ENCODE measurements at regions of chr16 and their contacts with region 1.

Region 1: DNA sequence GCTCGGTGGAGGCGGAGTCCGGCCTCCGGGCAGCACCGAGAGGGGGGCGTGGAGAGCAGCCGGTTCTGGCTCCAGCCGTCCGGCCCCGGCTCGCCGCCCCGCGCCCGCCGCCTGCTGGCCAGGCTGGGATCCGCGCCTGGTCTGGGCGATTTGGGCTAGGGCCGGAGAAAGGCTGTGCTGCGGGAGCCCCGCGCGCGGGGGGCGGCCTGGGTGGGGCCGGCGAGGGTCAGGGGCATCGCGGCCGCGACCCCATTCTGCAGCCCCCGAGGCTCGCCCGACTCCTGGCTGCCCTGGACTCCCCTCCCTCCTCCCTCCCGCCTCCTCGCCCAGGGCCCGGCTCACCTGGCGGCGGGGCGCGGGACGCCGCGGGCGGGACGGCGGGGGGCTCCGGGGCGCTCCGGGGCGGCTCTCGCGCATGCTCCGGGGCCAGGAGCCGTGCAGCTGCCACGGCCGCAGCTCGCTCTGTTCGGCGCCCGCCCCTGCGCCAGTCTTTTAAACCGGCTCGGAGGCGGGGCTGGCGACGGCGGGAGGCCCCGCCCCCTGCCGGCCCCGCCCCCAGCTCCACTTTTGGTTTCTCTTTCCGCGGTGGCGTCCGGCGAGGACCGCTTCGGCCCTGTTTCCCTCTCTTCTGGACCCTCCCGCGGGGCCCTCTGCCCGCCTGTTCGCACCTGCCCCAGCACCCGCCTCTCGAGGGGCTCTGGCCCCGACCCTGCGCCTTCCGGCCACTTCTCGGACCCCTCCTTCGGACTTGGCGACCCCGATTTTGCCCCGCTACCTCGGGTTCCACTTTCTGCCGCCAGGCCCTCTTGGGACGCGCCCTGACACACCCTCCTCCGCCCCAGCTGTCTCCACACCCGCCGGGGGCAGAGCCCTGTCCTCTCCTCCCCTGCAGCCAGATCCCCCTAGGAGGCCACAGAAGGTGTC is at the start of gene SOCS1:
- DNase-seq: peak; percentile 78
- H3K4me3 ChIP-seq: peak within 1 kb of the TSS; percentile 43 to 89 (median 73)
- H3K27ac ChIP-seq: peak within 1 kb of the TSS; percentile 31
- H3K4me1 ChIP-seq: peaks cover 10% of the 10 kb centered on the region
- H3K27me3 ChIP-seq: peaks cover 0 to 1% of the 10 kb centered on the region in 2 experiments
- CTCF ChIP-seq: peak; percentile 76 to 86
- POLR2A ChIP-seq: peak; percentile 97
- total RNA-seq, gene SOCS1: 0.81 and 1.1 TPM in 2 replicates

Region 2: DNA sequence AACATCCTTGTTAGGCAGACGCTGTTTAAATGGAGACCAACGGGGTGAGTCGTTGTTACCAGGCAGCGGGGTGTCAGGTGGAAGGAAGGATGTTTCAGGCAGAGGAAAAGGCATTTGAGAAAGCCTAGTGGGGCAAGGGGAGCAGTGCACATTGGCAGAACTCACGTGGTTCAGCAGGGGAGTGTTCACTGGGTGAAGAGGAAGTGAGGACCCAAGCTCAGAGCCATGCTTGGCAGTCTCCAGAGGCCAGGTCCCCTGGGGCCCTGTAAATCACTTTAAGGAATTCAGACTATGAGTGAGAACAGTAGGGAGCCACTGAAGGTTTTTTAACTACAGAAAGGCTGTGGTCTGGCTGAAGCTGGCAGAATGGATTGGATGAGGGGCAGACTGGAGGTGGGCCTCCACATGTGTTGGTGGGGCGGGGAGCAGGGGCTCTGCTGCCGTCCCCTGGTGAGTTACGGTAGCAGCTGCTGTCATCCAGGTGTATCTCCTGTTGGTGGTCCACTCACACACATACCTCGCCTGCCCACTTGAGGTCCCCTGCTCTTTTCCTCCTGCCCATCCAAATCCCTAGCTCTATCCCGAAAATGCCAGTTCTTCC is 306.5 kb before region 1 on chr16:
- CTCF ChIA-PET with region 1: interaction called, 44 read pairs
- POLR2A ChIA-PET with region 1: interaction called, 7 read pairs
- dilution Hi-C with region 1: no loop called
- intact Hi-C with region 1: loop called (anchors 1 kb)
- DNase-seq: no peak
- H3K4me3 ChIP-seq: no peak overlapping the region
- H3K27ac ChIP-seq: no peak overlapping the region
- H3K4me1 ChIP-seq: peaks cover 15% of the 10 kb centered on the region
- H3K27me3 ChIP-seq: no peaks in the 10 kb centered on the region
- CTCF ChIP-seq: no peak
- POLR2A ChIP-seq: no peak

Region 3: DNA sequence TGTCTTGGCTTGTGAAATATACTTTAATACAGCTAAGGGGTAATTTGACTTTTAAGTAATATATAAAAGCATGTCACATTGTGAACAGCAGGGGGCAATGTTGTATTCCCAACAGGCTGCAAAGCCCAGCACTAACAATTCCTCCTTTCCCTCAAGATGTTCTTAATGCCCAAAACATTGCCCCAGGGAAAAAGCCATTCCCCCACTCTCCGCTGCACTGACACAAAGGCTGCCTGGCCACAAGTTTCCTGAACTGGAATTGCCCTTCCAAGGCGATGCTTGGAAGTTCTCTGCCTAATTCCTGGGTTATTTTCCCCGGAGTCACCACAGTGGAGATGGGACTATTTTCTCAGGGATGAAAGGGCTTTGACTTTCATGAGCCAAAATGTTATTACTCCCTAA is 284.4 kb before region 1 on chr16:
- CTCF ChIA-PET with region 1: interaction called, 347 read pairs
- POLR2A ChIA-PET with region 1: interaction called, 9 read pairs
- dilution Hi-C with region 1: no loop called
- intact Hi-C with region 1: loop called (anchors 1 kb)
- DNase-seq: peak; percentile 73
- H3K4me3 ChIP-seq: no peak overlapping the region
- H3K27ac ChIP-seq: no peak overlapping the region
- H3K4me1 ChIP-seq: no peaks in the 10 kb centered on the region
- H3K27me3 ChIP-seq: no peaks in the 10 kb centered on the region
- CTCF ChIP-seq: peak; percentile 56 to 57
- POLR2A ChIP-seq: no peak

Region 4: GRCh38 chr16:11105038-11105903 is 150.7 kb before region 1 on chr16:
- CTCF ChIA-PET with region 1: interaction called, 19 read pairs
- POLR2A ChIA-PET with region 1: interaction called, 3 read pairs
- dilution Hi-C with region 1: no loop called
- intact Hi-C with region 1: loop called (anchors 1 kb)
- DNase-seq: peak; percentile 56
- H3K4me3 ChIP-seq: no peak overlapping the region
- H3K27ac ChIP-seq: no peak overlapping the region
- H3K4me1 ChIP-seq: peaks cover 17% of the 10 kb centered on the region
- H3K27me3 ChIP-seq: no peaks in the 10 kb centered on the region
- CTCF ChIP-seq: no peak
- POLR2A ChIP-seq: no peak

Region 5: GRCh38 chr16:11268921-11269375 is 12.9 kb after region 1 on chr16 and contains the start of gene TNP2:
- CTCF ChIA-PET with region 1: interaction called, 20 read pairs
- POLR2A ChIA-PET with region 1: no interaction called
- dilution Hi-C with region 1: no loop called
- intact Hi-C with region 1: no loop called
- DNase-seq: no peak
- H3K4me3 ChIP-seq: no peak within 1 kb of the TSS
- H3K27ac ChIP-seq: no peak within 1 kb of the TSS
- H3K4me1 ChIP-seq: no peaks in the 10 kb centered on the region
- H3K27me3 ChIP-seq: no peaks in the 10 kb centered on the region
- CTCF ChIP-seq: no peak
- POLR2A ChIP-seq: no peak
- total RNA-seq, gene TNP2: not detected in 2 replicates

Region 6: GRCh38 chr16:11370084-11370931 is 114.3 kb after region 1 on chr16:
- CTCF ChIA-PET with region 1: interaction called, 10 read pairs
- POLR2A ChIA-PET with region 1: no interaction called
- dilution Hi-C with region 1: no loop called
- intact Hi-C with region 1: no loop called
- DNase-seq: no peak
- H3K4me3 ChIP-seq: no peak overlapping the region
- H3K27ac ChIP-seq: no peak overlapping the region
- H3K4me1 ChIP-seq: no peaks in the 10 kb centered on the region
- H3K27me3 ChIP-seq: no peaks in the 10 kb centered on the region
- CTCF ChIP-seq: no peak
- POLR2A ChIP-seq: no peak

Region 7: DNA sequence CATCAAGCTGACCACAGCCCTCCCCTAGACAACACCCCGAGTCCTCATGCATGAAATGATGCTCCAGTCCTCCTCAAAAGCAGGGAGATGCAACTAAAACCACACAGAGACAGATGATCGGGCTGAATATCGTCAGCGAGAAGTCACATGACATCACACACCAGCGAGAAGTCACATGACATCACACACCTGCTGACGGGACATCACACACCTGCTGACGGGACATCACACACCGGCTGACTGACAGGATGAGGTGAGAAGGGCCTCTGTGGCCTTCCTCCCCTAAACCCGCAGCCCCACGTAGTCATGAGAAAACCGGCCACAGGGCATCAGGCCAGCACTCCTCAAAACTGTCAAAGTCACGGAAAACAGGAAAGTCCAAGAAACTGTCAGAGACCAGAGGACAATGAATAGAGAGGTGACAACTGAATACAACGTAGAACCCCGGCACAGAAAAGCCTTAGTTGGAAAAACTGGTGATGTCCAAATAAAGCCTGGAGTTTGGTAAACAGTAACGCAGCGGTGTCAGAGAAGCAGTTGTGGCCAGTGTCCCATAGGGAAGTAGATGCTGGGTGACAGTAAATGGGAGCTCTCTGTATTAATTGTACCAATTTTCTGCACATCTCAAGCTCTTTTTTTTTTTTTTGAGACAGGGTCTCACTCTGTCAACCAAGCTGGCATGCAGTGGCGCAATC is 316.4 kb after region 1 on chr16:
- CTCF ChIA-PET with region 1: no interaction called
- POLR2A ChIA-PET with region 1: no interaction called
- dilution Hi-C with region 1: no loop called
- intact Hi-C with region 1: no loop called
- DNase-seq: no peak
- H3K4me3 ChIP-seq: no peak overlapping the region
- H3K27ac ChIP-seq: no peak overlapping the region
- H3K4me1 ChIP-seq: no peaks in the 10 kb centered on the region
- H3K27me3 ChIP-seq: no peaks in the 10 kb centered on the region
- CTCF ChIP-seq: no peak
- POLR2A ChIP-seq: no peak